ENCODE measurements at regions of chrX and their contacts with region 1.

Region 1: GRCh38 chrX:13473442-13474163 is 95.8 kb upstream of the EGFL6 start:
- DNase-seq: no peak
- H3K4me3 Mint-ChIP-seq: peak overlapping the region; percentile 62
- H3K27ac Mint-ChIP-seq: peak overlapping the region; percentile 53
- H3K4me1 Mint-ChIP-seq: peaks cover 24% of the 10 kb centered on the region
- H3K27me3 Mint-ChIP-seq: no peaks in the 10 kb centered on the region

Region 2: GRCh38 chrX:13376857-13377549 is 96.6 kb before region 1 on chrX:
- CTCF ChIA-PET with region 1: no interaction called
- POLR2A ChIA-PET with region 1: no interaction called
- intact Hi-C with region 1: loop called (anchors 5 kb)
- DNase-seq: peak; percentile 31
- H3K4me3 Mint-ChIP-seq: no peak overlapping the region
- H3K27ac Mint-ChIP-seq: no peak overlapping the region
- H3K4me1 Mint-ChIP-seq: peaks cover 35% of the 10 kb centered on the region
- H3K27me3 Mint-ChIP-seq: no peaks in the 10 kb centered on the region

Region 3: GRCh38 chrX:13418126-13419097 is 55.2 kb before region 1 on chrX:
- CTCF ChIA-PET with region 1: no interaction called
- POLR2A ChIA-PET with region 1: no interaction called
- intact Hi-C with region 1: loop called (anchors 10 kb)
- DNase-seq: no peak
- H3K4me3 Mint-ChIP-seq: no peak overlapping the region
- H3K27ac Mint-ChIP-seq: no peak overlapping the region
- H3K4me1 Mint-ChIP-seq: peaks cover 10% of the 10 kb centered on the region
- H3K27me3 Mint-ChIP-seq: no peaks in the 10 kb centered on the region